ENCODE measurements at regions of chr1 and their contacts with region 1.

Region 1: GRCh38 chr1:87464022-87464490 is 135.4 kb downstream of the LMO4 start:
- DNase-seq: no peak
- ATAC-seq: no peak
- H3K4me3 Mint-ChIP-seq: no peak overlapping the region
- H3K27ac Mint-ChIP-seq: no peak overlapping the region
- H3K4me1 Mint-ChIP-seq: peaks cover 3% of the 10 kb centered on the region
- H3K27me3 Mint-ChIP-seq: peaks cover 4% of the 10 kb centered on the region
- CTCF ChIP-seq: no peak

Region 2: DNA sequence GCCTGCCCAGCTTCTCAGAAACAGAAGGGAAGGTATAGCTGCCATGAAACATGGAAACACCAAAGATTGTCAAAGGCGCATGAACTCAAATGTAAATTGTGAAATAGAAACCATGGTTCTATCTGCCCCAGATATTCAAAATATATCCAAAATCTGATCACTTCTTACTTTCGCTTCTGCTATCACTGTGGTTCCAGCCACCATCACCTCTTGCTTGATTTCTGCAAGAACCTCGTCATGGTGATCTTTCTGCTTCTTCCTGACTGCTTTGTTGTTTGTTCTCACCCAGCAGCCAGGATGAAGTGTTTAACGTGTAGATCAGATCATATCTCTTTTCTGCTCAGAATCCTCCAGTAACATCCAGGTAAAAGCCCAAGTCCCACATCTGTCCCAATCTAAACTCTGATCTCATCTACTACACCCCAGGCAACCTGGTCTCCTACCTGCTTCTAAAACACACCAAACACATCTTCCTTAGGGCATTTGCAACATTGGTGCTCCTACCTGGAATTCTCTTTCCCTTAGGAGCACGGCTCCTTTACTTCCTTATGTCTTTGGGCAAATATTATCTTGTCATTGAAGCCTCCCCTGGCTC is 145.9 kb before region 1 on chr1:
- CTCF ChIA-PET with region 1: no interaction called
- POLR2A ChIA-PET with region 1: no interaction called
- intact Hi-C with region 1: no loop called
- DNase-seq: no peak
- ATAC-seq: peak; percentile 47
- H3K4me3 Mint-ChIP-seq: peak overlapping the region; percentile 29
- H3K27ac Mint-ChIP-seq: no peak overlapping the region
- H3K4me1 Mint-ChIP-seq: peaks cover 17% of the 10 kb centered on the region
- H3K27me3 Mint-ChIP-seq: no peaks in the 10 kb centered on the region
- CTCF ChIP-seq: no peak

Region 3: DNA sequence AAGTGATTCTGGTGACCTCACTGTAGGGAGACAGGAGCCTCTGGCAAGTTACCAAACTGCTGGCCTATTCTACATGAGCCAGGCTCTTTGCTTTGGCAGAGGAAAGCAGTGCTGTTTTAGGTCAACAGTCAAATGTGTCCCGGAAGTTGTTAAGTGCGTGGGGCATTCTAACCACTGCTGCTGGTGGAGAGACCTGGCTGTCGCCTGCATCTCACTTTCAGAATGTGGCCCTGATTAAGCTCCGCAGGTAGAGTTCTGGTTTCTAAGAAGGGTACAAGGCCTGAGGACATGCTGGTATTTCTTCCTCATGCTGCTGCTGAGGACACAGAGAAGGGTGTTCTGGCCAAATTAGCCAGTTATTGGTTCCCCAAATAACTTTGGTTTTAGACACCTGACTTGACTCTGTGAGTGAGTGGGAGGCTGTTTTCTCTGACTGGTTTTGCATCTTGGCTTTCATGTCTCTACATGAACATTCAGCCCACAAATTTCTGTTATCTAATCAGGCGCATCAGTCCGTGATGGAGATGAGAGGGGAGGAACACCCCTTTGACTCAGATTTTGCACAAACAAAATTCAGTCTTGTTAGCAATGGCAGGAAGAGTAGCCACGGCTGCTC is 14.6 kb before region 1 on chr1:
- CTCF ChIA-PET with region 1: no interaction called
- POLR2A ChIA-PET with region 1: no interaction called
- intact Hi-C with region 1: no loop called
- DNase-seq: peak; percentile 23
- ATAC-seq: peak; percentile 86
- H3K4me3 Mint-ChIP-seq: peak overlapping the region; percentile 51
- H3K27ac Mint-ChIP-seq: peak overlapping the region; percentile 90
- H3K4me1 Mint-ChIP-seq: peaks cover 33% of the 10 kb centered on the region
- H3K27me3 Mint-ChIP-seq: no peaks in the 10 kb centered on the region
- CTCF ChIP-seq: no peak

Region 4: GRCh38 chr1:87757676-87758075 is 293.6 kb after region 1 on chr1:
- CTCF ChIA-PET with region 1: no interaction called
- POLR2A ChIA-PET with region 1: no interaction called
- intact Hi-C with region 1: loop called (anchors 10 kb)
- DNase-seq: no peak
- ATAC-seq: no peak
- H3K4me3 Mint-ChIP-seq: no peak overlapping the region
- H3K27ac Mint-ChIP-seq: no peak overlapping the region
- H3K4me1 Mint-ChIP-seq: peaks cover 17% of the 10 kb centered on the region
- H3K27me3 Mint-ChIP-seq: no peaks in the 10 kb centered on the region
- CTCF ChIP-seq: no peak

Measured in activated B cell treated with CpG ODN at 0.5 μM for 24 hours (primary cell).